HEK293T (cell line): ENCODE measurements at regions of chr1 and their contacts with region 1.

Region 1: DNA sequence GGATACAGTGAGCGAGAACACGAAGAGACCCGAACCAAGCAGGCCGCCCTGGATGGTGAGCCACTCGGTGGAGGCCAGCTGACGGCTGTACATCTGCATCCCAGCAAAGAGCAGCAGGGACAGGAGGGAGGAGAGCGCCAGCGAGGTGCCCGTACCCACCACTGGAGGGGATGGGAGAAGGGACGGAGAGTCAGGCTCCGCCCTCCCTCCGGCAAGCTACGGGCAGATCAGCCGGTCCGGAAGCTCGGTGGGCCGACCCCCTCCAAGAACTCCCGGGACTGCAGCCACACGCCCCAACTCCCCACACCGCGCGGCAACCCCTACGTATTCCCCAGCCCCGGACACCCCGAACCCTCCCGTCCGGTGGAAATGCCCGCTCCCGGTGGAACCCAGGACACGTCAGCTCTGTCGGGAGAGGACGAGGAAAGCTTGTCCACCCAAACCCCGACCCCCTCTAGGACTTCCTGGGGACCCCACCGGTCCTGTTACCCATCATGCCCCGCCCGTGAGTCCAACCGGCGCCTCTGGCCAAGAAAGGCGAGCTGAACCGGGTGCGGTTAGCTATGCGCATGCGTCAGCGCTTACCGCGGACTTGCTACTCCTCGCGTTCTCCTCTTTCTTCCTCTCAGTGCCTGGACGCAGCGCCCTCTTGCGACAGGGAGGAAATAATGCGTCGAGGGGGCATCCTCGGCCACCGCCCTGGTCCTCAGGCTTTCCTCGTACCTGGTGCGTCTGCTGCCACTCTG is at the start of gene KRTCAP2:
- DNase-seq: peak; percentile 99

Region 2: GRCh38 chr1:155073361-155074242 is 99.3 kb before region 1 on chr1:
- CTCF ChIA-PET with region 1: interaction called, 4 read pairs
- POLR2A ChIA-PET with region 1: interaction called, 14 read pairs
- DNase-seq: no peak

Region 3: DNA sequence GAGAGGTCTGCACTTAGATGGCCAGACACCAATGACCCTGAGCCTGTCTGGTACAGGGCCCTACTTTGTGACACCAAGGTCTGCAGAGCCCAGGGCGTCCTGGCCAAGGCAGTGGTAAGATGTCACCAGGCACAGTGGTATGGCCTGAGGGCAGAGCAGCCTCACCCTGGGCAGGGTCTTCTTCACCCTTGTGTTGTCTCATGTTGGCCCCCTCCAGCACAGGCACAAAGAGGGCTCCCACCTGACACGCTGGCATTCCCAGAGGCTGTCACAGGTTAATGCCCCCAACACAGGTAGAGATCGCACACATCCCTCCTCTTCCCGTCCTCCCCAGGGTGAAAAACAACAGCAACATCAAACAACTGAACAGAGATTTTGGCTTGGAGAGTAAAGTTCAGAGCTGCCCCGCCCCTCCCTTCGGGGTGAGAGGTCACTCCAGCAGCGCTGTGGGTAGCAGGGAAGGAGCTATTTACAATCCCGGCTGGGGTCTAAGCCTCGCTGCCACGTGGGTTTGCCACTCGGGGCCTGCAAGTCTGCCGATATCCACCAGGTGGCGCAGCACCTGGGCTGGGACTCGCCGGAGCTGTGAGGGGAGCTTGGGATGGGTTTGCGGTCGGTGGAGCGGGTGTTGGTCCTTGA is 81.7 kb before region 1 on chr1:
- CTCF ChIA-PET with region 1: interaction called, 89 read pairs
- POLR2A ChIA-PET with region 1: interaction called, 25 read pairs
- DNase-seq: peak; percentile 92

Region 4: GRCh38 chr1:155135415-155136028 is 37.4 kb before region 1 on chr1 and contains the start of gene SLC50A1:
- CTCF ChIA-PET with region 1: interaction called, 6 read pairs
- POLR2A ChIA-PET with region 1: interaction called, 17 read pairs
- DNase-seq: peak; percentile 99

Region 5: DNA sequence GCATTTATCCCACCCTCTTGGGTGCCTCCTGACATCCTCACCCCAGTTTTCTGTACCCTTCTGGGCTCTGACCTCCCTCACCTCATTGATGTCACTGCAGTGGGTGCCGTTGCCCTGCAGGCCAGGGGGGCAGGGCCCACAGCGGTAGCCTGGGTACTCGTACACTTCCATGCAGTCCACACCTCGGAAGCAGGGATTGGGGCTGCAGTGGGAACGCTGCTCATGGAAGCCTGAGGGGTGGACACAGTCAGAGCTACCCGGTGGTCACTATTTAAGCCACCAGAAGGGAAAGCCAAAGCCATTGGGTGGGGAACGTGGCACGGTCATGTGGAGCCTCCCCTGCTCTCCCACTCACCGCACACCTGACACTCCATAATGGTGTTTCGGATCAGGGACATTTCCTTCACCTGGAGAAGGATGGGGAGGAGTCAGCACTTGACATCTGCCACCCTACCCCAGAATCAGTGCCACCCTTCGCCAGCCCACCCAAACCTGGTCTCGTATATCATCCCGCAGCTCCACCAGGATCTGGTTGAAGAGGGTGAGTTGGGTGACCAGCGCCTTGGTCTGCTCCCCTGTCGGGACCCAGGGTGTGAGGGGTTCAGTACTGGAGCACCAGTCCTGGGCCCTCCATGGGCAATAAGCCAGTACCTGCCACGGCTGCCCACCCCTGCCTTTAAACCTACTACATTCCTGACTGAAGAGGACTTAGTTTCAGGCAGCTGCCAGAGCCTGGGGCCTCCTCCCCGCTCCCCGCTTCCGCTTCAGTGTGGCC is 30.0 kb after region 1 on chr1:
- CTCF ChIA-PET with region 1: interaction called, 7 read pairs
- POLR2A ChIA-PET with region 1: interaction called, 13 read pairs
- DNase-seq: no peak

Region 6: GRCh38 chr1:155323798-155324610 is 151.1 kb after region 1 on chr1:
- CTCF ChIA-PET with region 1: no interaction called
- POLR2A ChIA-PET with region 1: interaction called, 10 read pairs
- DNase-seq: peak; percentile 95

Region 7: DNA sequence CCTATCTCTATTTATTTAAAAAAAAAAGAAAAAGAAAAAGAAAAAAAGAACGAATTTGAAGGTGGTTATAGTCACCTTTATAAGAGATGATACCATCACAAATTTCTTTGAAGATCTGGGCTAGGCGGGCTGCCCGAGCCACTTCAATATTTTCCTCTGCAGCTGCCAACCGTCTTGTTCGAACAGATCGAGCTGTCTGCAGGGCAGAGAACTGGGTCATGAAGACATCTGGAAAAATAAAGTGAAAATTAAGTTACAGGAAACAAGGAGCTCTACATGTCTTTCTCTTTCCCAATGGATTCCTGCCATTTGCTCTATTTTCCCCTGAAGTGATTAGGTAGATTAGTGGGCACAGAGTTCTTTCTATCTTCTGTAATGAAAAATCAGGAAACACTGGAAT is 179.7 kb after region 1 on chr1:
- CTCF ChIA-PET with region 1: no interaction called
- POLR2A ChIA-PET with region 1: no interaction called
- DNase-seq: no peak